ENCODE measurements at regions of chr9 and their contacts with region 1.

Region 1: GRCh38 chr9:7402334-7403027 is 397.1 kb downstream of the DMAC1 start:
- DNase-seq: no peak
- H3K4me3 ChIP-seq: peak overlapping the region in 1 of 4 experiments; percentile 30; a peak in 2 of 8 replicates
- H3K27ac ChIP-seq: no peak overlapping the region
- H3K4me1 ChIP-seq: peaks cover 3 to 18% (median 14%) of the 10 kb centered on the region in 4 experiments; a peak in 5 of 7 replicates
- H3K27me3 ChIP-seq: no peaks in the 10 kb centered on the region
- CTCF ChIP-seq: no peak
- EP300 ChIP-seq: no peak
- POLR2A ChIP-seq: no peak
- RAD21 ChIP-seq: no peak

Region 2: GRCh38 chr9:7536310-7536939 is 133.9 kb after region 1 on chr9:
- CTCF ChIA-PET with region 1: interaction called, 10 read pairs
- POLR2A ChIA-PET with region 1: no interaction called
- DNase-seq: peak in 1 of 2 experiments; percentile 68
- H3K4me3 ChIP-seq: no peak overlapping the region
- H3K27ac ChIP-seq: no peak overlapping the region
- H3K4me1 ChIP-seq: no peaks in the 10 kb centered on the region
- H3K27me3 ChIP-seq: no peaks in the 10 kb centered on the region
- CTCF ChIP-seq: peak; percentile 80 to 93 (median 86)
- EP300 ChIP-seq: no peak
- POLR2A ChIP-seq: no peak
- RAD21 ChIP-seq: peak; percentile 81 to 86

Region 3: DNA sequence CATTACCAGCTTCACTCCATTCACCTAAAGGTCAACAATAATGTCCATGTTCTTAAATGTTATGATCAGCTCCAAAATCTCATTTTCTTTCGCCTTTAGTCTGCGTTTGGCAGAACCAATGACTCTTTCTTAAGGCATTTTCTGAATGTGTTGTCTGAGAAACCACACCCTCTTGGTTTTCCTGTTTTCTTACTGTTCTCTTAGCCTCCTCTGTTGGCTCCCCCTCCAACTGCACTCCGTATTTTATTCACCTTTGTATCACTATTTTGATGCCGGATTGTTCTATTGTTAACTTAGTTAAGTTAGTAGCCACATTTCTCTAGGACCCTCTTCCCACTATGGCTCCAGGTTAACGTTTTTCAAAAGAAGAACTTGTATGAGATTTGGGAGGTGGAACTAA is 211.4 kb after region 1 on chr9:
- CTCF ChIA-PET with region 1: no interaction called
- POLR2A ChIA-PET with region 1: no interaction called
- DNase-seq: no peak
- H3K4me3 ChIP-seq: no peak overlapping the region
- H3K27ac ChIP-seq: no peak overlapping the region
- H3K4me1 ChIP-seq: no peaks in the 10 kb centered on the region
- H3K27me3 ChIP-seq: no peaks in the 10 kb centered on the region
- CTCF ChIP-seq: no peak
- EP300 ChIP-seq: no peak
- POLR2A ChIP-seq: no peak
- RAD21 ChIP-seq: no peak

Measured in H1 (cell line).